ENCODE measurements at regions of chr3 and their contacts with region 1.

Region 1: DNA sequence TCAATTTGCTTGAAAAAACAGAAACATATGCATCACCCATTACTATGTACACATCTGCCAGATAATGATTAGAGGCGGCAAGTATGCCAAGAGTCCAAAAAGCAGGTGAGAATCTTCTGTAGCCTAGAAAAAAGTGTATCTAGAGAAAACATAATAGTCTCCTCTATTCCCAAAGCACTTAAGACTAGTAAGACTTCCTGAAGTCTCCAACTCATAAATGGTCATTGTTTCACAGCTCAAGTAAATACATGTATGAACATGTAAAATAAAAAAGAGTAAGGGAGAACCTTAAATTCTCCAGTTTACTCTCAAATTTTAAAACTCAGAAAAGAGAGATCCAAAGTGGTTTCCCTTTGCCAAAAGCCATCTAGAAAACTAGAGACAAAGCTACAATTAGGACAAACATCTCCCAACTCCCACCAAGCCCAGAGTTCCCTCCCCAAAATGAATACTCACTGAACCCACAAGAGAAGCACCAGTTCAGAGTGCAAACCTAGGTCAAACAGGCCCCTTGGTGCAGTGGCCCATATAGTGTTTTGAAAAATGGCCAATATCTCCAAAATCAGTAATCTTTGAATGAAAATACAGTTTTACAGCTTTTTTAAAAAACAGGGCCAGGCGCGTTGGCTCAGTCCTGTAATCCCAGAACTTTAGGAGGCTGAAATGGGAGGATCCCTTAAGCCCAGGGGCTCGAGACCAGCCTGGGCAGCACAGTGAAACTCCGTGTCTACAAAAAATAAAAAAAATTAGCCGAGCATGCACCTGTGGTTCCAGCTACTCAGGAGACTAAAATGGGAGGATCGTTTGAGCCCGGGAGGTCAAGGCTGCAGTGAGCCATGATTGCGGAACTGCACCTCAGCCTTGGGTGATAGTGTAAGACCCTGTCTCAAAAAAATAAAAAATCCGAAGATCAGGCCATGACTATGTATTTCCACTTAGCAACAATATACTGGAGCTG is 11.0 kb upstream of the MAP4 start:
- DNase-seq: no peak
- ATAC-seq: peak; percentile 52
- H3K4me3 ChIP-seq: no peak overlapping the region
- H3K27ac ChIP-seq: no peak overlapping the region
- H3K4me1 ChIP-seq: peaks cover 4% of the 10 kb centered on the region in 2 experiments; a peak in 3 of 5 replicates
- H3K27me3 ChIP-seq: no peaks in the 10 kb centered on the region
- CTCF ChIP-seq: no peak
- EP300 ChIP-seq: no peak
- POLR2A ChIP-seq: no peak
- RAD21 ChIP-seq: no peak

Region 2: GRCh38 chr3:48016301-48016973 is 10.8 kb before region 1 on chr3 and contains the start of gene MAP4:
- CTCF ChIA-PET with region 1: no interaction called
- POLR2A ChIA-PET with region 1: interaction called, 10 read pairs
- in situ Hi-C with region 1: no loop called
- intact Hi-C with region 1: no loop called
- DNase-seq: peak; percentile 29 to 70 (median 42)
- ATAC-seq: peak; percentile 77
- H3K4me3 ChIP-seq: no peak within 1 kb of the TSS
- H3K27ac ChIP-seq: peak within 1 kb of the TSS; percentile 67
- H3K4me1 ChIP-seq: peaks cover 8 to 37% of the 10 kb centered on the region in 2 experiments; a peak in 3 of 5 replicates
- H3K27me3 ChIP-seq: no peaks in the 10 kb centered on the region
- CTCF ChIP-seq: no peak
- EP300 ChIP-seq: peak; percentile 29
- POLR2A ChIP-seq: no peak
- RAD21 ChIP-seq: no peak
- polyA plus RNA-seq, gene MAP4: 13.3 to 28.4 TPM

Region 3: DNA sequence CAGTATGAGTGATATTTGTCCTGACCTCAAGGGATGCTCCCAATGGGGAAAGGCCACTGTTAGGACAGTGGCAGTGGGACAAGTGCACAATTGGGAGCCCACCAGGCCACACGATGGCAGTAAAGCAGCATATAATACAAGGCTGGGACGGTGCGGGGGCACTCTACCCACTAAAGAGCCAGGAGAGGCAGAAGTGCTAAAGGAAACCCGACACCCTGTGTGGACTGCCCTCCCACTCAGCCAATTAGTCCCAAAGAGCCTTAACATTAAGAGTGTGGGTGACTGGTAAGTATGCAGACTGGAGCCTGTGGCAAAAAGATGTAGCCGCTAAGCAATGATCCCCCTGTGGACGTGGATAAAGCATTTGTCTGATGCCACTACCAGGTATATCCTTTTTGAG is 205.5 kb after region 1 on chr3:
- CTCF ChIA-PET with region 1: no interaction called
- POLR2A ChIA-PET with region 1: no interaction called
- in situ Hi-C with region 1: no loop called
- intact Hi-C with region 1: no loop called
- DNase-seq: peak; percentile 58 to 80 (median 62)
- ATAC-seq: peak; percentile 99
- H3K4me3 ChIP-seq: no peak overlapping the region
- H3K27ac ChIP-seq: no peak overlapping the region
- H3K4me1 ChIP-seq: peaks cover 7 to 14% of the 10 kb centered on the region in 2 experiments; a peak in 3 of 5 replicates
- H3K27me3 ChIP-seq: no peaks in the 10 kb centered on the region
- CTCF ChIP-seq: peak; percentile 70 to 73 (median 71)
- EP300 ChIP-seq: no peak
- POLR2A ChIP-seq: no peak
- RAD21 ChIP-seq: peak; percentile 41 to 68

Measured in K562 (cell line).